ENCODE measurements at regions of chr9 and their contacts with region 1.

Region 1: DNA sequence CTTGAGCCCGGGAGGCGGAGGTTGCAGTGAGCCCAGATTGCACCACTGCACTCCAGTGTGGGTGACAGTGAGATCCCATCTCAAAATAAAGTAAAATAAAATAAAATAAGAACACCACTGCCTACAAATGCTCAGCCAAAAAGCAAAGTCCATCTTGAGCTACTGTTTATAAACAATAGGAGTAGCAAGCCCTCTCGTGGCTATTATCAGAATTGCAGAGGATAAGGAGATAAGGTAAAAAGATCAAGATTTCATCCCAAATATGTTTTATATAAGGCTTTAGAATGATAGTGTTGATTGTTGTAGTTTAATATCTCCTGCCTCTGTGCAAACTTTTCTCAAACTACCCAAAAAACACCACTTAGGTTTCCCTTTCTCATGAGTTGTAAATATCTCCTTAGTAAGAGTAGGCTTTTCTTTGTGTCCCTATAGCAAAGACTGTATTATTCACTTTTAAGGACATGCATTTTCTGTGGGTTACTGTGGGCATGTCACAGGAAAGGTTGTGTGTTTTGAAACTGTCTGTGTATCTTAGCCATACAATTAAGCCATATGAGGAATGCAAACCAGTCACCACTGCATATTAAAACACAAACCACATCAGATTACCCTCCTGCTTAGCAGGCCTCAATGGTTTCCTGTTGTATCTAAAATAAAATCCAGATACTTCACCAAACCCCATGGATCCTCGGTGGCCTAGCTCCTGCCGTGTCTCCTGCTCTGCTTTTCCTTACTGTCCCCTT is 31.8 kb upstream of the CKS2 start:
- DNase-seq: peak; percentile 14
- H3K4me3 ChIP-seq: no peak overlapping the region
- CTCF ChIP-seq: peak; percentile 51

Region 2: DNA sequence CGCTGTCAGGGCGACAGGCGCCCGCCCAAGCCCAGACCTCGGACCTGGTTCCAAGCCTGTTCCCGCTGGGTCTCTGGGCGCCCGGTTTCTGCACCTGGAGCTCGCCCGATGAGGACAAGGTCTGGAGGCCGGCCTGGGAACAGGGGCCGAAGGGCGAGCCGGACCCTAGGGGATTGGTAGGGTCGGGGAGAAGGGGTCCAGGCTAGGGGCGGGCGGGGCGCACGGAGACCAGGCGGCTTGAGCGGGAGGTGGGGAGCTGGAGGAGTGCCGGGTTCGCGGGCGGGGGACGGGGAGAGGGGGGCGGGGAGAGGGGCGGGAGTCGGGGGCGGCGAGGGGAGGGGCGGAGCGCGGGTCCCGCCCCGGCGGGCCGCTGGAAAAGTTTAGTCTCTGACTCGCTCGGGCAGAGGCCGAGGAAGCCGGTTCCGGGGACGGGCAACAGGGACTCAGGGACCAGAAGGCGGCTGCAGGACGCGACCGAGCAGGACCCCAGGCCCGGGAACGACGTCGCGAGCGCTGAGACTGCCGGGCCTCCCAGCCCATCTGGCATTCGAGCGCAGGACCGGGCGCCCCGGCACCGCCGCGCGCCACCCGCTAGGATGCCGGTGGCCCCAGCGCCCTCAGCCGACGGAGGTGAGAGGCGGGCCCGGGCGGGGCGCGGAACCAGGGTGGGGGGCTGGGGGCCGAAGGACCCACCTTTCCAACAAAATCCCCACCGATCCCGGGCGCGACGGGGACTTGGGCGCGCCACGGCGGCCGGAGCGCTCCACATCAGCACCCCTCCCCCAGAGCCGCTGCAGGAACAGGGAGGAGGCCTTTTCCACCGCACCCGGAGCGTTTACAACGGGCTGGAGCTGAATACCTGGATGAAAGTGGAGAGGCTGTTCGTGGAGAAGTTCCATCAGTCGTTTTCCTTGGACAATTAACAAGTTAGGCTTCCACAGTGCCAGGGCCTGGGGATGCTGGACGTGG is 287.8 kb before region 1 on chr9 and contains the start of gene S1PR3:
- CTCF ChIA-PET with region 1: no interaction called
- POLR2A ChIA-PET with region 1: no interaction called
- DNase-seq: no peak
- H3K4me3 ChIP-seq: peak within 1 kb of the TSS; percentile 73
- CTCF ChIP-seq: peak; percentile 18

Region 3: GRCh38 chr9:89291741-89292140 is 12.6 kb after region 1 on chr9:
- CTCF ChIA-PET with region 1: interaction called, 13 read pairs
- POLR2A ChIA-PET with region 1: no interaction called
- DNase-seq: no peak
- H3K4me3 ChIP-seq: no peak overlapping the region
- CTCF ChIP-seq: no peak